Activated naive CD4-positive, alpha-beta T cell treated with anti-CD3 and anti-CD28 coated beads for 36 hours (primary cell): ENCODE measurements at regions of chr15 and their contacts with region 1.

Region 1: DNA sequence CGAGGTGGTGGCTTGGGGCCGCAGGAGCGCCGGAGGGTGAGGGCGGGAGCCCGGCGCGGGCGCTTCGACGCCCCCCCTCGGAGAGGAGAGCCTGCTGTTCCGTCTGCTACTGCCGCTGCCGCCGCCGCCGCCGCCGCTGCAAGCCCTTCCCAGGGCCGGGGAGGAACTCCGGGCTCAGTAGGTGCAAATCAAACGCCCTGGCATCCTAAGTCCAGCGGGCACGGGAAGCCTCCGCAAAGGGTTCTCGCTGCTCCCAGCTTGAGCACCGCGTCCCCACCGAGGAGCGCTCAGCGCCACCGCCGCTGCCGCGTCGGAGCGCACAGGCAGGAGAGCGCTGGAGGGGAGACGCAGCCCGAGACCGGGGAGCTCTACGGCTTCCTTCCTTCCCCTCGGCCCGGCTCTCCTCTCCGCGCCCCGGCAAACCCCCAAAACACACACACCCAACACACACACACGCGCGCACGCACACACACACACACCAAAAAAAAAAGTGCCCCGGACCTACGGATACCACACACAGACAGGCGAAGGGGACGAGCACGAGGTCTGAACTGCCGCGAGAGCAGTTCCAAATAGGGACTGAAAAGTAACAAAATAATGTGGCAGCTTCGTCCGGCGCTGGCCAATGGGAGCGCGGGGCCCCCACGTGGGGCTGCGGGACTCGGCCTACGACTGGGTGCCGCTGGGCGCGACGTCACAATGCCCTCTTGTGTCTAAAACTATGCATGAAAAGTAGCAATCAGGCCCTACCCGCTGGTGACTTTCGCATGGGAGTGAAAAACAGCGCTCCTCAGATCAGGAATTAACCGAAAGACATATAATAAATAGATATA is at the start of gene TLE3:
- DNase-seq: peak; percentile 98
- H3K4me3 Mint-ChIP-seq: peak within 1 kb of the TSS; percentile 99
- H3K27ac Mint-ChIP-seq: peak within 1 kb of the TSS; percentile 99
- H3K4me1 Mint-ChIP-seq: peaks cover 37% of the 10 kb centered on the region
- H3K27me3 Mint-ChIP-seq: peaks cover 2% of the 10 kb centered on the region
- total RNA-seq, gene TLE3: 105 to 109 TPM

Region 2: GRCh38 chr15:69452692-69453521 is 644.6 kb before region 1 on chr15 and contains the start of gene RPLP1:
- CTCF ChIA-PET with region 1: no interaction called
- intact Hi-C with region 1: loop called (anchors 1 kb)
- DNase-seq: peak; percentile 95
- H3K4me3 Mint-ChIP-seq: peak within 1 kb of the TSS; percentile 99
- H3K27ac Mint-ChIP-seq: peak within 1 kb of the TSS; percentile 99
- H3K4me1 Mint-ChIP-seq: peaks cover 27% of the 10 kb centered on the region
- H3K27me3 Mint-ChIP-seq: no peaks in the 10 kb centered on the region
- total RNA-seq, gene RPLP1: 2,674 to 2,950 TPM

Region 3: GRCh38 chr15:69713726-69714559 is 383.6 kb before region 1 on chr15:
- CTCF ChIA-PET with region 1: no interaction called
- intact Hi-C with region 1: loop called (anchors 1 kb)
- DNase-seq: peak; percentile 90
- H3K4me3 Mint-ChIP-seq: no peak overlapping the region
- H3K27ac Mint-ChIP-seq: peak overlapping the region; percentile 73
- H3K4me1 Mint-ChIP-seq: peaks cover 55% of the 10 kb centered on the region
- H3K27me3 Mint-ChIP-seq: no peaks in the 10 kb centered on the region

Region 4: DNA sequence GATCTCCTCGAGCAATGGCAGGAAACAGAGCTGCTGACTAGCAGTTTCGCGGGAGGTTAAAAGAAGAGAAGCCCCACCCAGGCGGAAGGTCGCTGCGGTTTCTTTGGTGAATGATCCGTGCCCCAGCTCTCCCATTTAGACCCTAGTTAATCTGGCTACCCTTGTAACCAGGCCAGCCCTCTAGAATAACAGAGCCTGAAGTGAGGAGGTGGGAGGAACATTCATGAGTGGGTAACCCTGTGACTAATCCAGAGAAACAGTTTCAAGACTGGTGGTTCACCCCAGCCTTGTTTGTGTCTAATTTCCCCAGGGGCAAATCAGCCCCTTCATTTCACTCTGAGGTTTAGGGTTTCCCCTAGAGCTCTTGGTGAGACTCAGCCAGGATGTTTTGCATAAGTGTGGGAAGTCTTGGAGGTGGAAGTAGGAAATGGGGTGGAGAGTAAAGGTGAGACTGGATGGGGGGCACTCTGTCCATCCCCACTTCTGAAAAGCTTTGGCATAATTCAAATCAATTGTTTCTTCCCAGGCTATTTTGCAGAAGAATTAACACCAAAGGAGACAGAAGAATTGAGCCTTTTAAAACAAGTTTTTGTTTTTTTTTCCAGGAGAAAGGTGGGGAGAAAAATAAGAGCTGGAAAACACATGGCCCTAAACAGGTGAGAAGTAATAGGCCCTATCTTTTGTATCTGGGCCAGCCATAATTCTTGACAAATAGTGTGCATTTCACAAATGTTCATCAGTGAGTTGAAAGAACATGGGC is 341.8 kb before region 1 on chr15:
- CTCF ChIA-PET with region 1: interaction called, 4 read pairs
- intact Hi-C with region 1: loop called (anchors 1 kb)
- DNase-seq: peak; percentile 90
- H3K4me3 Mint-ChIP-seq: peak overlapping the region; percentile 46
- H3K27ac Mint-ChIP-seq: peak overlapping the region; percentile 97
- H3K4me1 Mint-ChIP-seq: peaks cover 94% of the 10 kb centered on the region
- H3K27me3 Mint-ChIP-seq: peaks cover 4% of the 10 kb centered on the region

Region 5: DNA sequence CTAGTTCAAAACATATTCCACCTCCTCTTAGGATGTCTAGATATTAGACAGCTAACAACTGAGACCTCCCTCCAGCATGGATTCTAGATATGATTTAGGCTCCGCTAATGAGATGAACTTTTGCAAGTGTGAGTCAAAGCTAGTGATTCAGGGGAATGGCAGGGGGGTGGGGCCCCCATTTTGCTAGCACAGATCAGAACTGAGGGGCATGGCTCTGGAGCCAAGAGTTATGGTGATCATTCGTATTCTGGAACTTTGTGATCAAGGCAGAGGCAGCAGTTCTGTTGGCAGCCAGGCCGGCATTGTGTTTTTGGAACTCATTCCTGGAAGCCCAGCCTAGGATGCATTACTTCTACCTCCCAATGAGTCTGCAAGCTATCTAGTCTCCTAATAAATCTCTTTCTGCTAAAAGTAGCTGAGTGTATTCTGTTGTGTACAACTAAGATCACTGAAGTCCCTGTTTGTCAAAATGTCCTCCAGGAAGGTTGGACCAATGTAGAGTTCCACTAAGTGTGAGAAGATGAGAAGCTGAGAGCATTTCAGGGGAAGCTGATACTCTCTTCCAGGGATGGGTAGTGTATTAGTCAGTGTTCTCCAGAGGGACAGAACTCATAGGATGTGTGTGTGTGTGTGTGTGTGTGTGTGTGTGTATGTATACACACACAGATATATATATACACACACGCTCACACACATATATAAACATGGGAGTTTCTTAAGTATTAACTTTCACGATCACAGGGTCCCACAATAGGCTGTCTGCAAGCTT is 312.6 kb before region 1 on chr15:
- CTCF ChIA-PET with region 1: no interaction called
- intact Hi-C with region 1: no loop called
- DNase-seq: no peak
- H3K4me3 Mint-ChIP-seq: no peak overlapping the region
- H3K27ac Mint-ChIP-seq: no peak overlapping the region
- H3K4me1 Mint-ChIP-seq: peaks cover 27% of the 10 kb centered on the region
- H3K27me3 Mint-ChIP-seq: peaks cover 10% of the 10 kb centered on the region

Region 6: DNA sequence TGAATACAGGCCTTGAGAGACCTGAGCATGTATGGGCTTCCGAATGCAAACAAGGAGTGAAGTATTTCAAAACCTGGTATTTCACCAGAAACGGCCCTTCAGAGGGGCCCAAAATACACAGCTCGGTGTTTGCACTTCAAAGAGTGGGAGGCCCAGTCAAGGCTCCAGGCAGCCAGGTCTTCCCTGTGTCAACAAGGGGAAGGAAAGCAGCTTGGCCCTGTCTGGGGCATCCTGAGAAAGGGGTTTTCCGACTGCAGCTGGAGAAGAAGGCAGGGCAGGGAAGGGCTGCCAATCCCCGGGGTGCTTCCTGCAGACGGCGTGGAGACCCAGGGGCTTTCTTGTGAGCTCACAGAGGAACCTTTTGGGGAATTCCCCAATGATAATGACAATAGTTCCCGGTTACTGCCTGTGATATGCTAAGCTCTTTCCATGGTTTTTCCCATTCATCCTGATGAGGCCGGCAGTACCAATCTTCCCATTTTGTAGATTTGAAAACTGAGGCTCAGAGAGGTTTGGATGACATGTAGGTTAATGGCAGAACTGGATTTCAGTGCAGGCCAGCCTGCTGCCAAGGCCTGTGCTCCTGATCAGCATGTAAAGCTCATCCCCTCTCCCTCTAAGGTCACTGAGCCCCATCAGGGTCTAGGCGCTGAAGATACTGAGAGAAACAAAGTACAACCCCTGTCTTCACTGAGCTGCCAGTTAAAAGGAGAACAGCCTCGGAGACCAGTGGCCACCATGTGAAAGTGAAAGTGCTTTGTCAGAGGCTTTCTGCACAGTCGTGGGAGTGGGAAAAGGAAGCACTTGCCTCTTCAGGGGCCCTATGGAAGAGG is 43.2 kb after region 1 on chr15:
- CTCF ChIA-PET with region 1: interaction called, 4 read pairs
- intact Hi-C with region 1: loop called (anchors 1 kb)
- DNase-seq: peak; percentile 78
- H3K4me3 Mint-ChIP-seq: no peak overlapping the region
- H3K27ac Mint-ChIP-seq: peak overlapping the region; percentile 32
- H3K4me1 Mint-ChIP-seq: peaks cover 34% of the 10 kb centered on the region
- H3K27me3 Mint-ChIP-seq: peaks cover 3% of the 10 kb centered on the region

Region 7: GRCh38 chr15:70488002-70488605 is 390.6 kb after region 1 on chr15:
- CTCF ChIA-PET with region 1: interaction called, 3 read pairs
- intact Hi-C with region 1: loop called (anchors 1 kb)
- DNase-seq: peak; percentile 84
- H3K4me3 Mint-ChIP-seq: no peak overlapping the region
- H3K27ac Mint-ChIP-seq: no peak overlapping the region
- H3K4me1 Mint-ChIP-seq: peaks cover 42% of the 10 kb centered on the region
- H3K27me3 Mint-ChIP-seq: peaks cover 2% of the 10 kb centered on the region